ENCODE measurements at regions of chr15 and their contacts with region 1.

Region 1: GRCh38 chr15:58839485-58839884 is 68.4 kb downstream of the MINDY2 start:
- DNase-seq: no peak
- ATAC-seq: peak; percentile 78
- H3K4me3 ChIP-seq: no peak overlapping the region
- H3K27ac ChIP-seq: no peak overlapping the region
- H3K4me1 ChIP-seq: peaks cover 23% of the 10 kb centered on the region
- H3K27me3 ChIP-seq: no peaks in the 10 kb centered on the region
- CTCF ChIP-seq: peak; percentile 32 to 53 (median 41); a peak in 5 of 6 replicates
- EP300 ChIP-seq: no peak
- POLR2A ChIP-seq: no peak
- RAD21 ChIP-seq: peak; percentile 75

Region 2: GRCh38 chr15:58528188-58528870 is 311.2 kb before region 1 on chr15:
- CTCF ChIA-PET with region 1: no interaction called
- POLR2A ChIA-PET with region 1: no interaction called
- RAD21 ChIA-PET with region 1: no interaction called
- SMC1A ChIA-PET with region 1: no interaction called
- in situ Hi-C with region 1: no loop called
- intact Hi-C with region 1: no loop called
- DNase-seq: no peak
- ATAC-seq: no peak
- H3K4me3 ChIP-seq: no peak overlapping the region
- H3K27ac ChIP-seq: no peak overlapping the region
- H3K4me1 ChIP-seq: no peaks in the 10 kb centered on the region
- H3K27me3 ChIP-seq: no peaks in the 10 kb centered on the region
- CTCF ChIP-seq: no peak
- EP300 ChIP-seq: no peak
- POLR2A ChIP-seq: no peak
- RAD21 ChIP-seq: no peak

Region 3: GRCh38 chr15:58852347-58852746 is 12.9 kb after region 1 on chr15:
- CTCF ChIA-PET with region 1: interaction called, 10 read pairs
- POLR2A ChIA-PET with region 1: no interaction called
- RAD21 ChIA-PET with region 1: interaction called, 3 read pairs
- SMC1A ChIA-PET with region 1: no interaction called
- in situ Hi-C with region 1: no loop called
- intact Hi-C with region 1: no loop called
- DNase-seq: no peak
- ATAC-seq: no peak
- H3K4me3 ChIP-seq: no peak overlapping the region
- H3K27ac ChIP-seq: no peak overlapping the region
- H3K4me1 ChIP-seq: no peaks in the 10 kb centered on the region
- H3K27me3 ChIP-seq: no peaks in the 10 kb centered on the region
- CTCF ChIP-seq: no peak
- EP300 ChIP-seq: no peak
- POLR2A ChIP-seq: no peak
- RAD21 ChIP-seq: no peak

Region 4: GRCh38 chr15:58898150-58898680 is 58.7 kb after region 1 on chr15:
- CTCF ChIA-PET with region 1: no interaction called
- POLR2A ChIA-PET with region 1: no interaction called
- RAD21 ChIA-PET with region 1: no interaction called
- SMC1A ChIA-PET with region 1: no interaction called
- in situ Hi-C with region 1: no loop called
- intact Hi-C with region 1: no loop called
- DNase-seq: no peak
- ATAC-seq: no peak; the same call in 2 of the 3 replicates
- H3K4me3 ChIP-seq: no peak overlapping the region
- H3K27ac ChIP-seq: no peak overlapping the region
- H3K4me1 ChIP-seq: peaks cover 3% of the 10 kb centered on the region; the same call in 1 of the 2 replicates
- H3K27me3 ChIP-seq: no peaks in the 10 kb centered on the region
- CTCF ChIP-seq: no peak
- EP300 ChIP-seq: no peak
- POLR2A ChIP-seq: no peak
- RAD21 ChIP-seq: no peak

Region 5: GRCh38 chr15:59516655-59517461 is 677.4 kb after region 1 on chr15:
- CTCF ChIA-PET with region 1: no interaction called
- POLR2A ChIA-PET with region 1: no interaction called
- RAD21 ChIA-PET with region 1: no interaction called
- SMC1A ChIA-PET with region 1: no interaction called
- in situ Hi-C with region 1: no loop called
- intact Hi-C with region 1: loop called (anchors 10 kb)
- DNase-seq: no peak
- ATAC-seq: peak; percentile 83
- H3K4me3 ChIP-seq: peak overlapping the region; percentile 35
- H3K27ac ChIP-seq: peak overlapping the region; percentile 93
- H3K4me1 ChIP-seq: peaks cover 27% of the 10 kb centered on the region
- H3K27me3 ChIP-seq: no peaks in the 10 kb centered on the region
- CTCF ChIP-seq: no peak
- EP300 ChIP-seq: no peak
- POLR2A ChIP-seq: no peak
- RAD21 ChIP-seq: no peak

Measured in GM12878 (cell line).